Prostate gland (tissue), 2 donors: ENCODE measurements at regions of chr17 and their contacts with region 1.

Region 1: GRCh38 chr17:45894022-45894784 is at the start of gene MAPT:
- DNase-seq: peak; percentile 87
- H3K4me3 ChIP-seq: peak within 1 kb of the TSS; percentile 68 to 73
- H3K27ac ChIP-seq: peak within 1 kb of the TSS; percentile 62
- H3K4me1 ChIP-seq: no peaks in the 10 kb centered on the region
- H3K27me3 ChIP-seq: peaks cover 14% of the 10 kb centered on the region
- CTCF ChIP-seq: peak; percentile 93 to 99 (median 96)
- POLR2A ChIP-seq: peak; percentile 28
- total RNA-seq, gene MAPT: 11.7 to 14.7 TPM

Region 2: GRCh38 chr17:45852535-45853297 is 41.5 kb before region 1 on chr17:
- intact Hi-C with region 1: no loop called
- DNase-seq: peak; percentile 50
- H3K4me3 ChIP-seq: no peak overlapping the region
- H3K27ac ChIP-seq: no peak overlapping the region
- H3K4me1 ChIP-seq: no peaks in the 10 kb centered on the region
- H3K27me3 ChIP-seq: no peaks in the 10 kb centered on the region
- CTCF ChIP-seq: peak; percentile 78 to 80 (median 79)
- POLR2A ChIP-seq: no peak

Region 3: GRCh38 chr17:45940826-45941225 is 46.6 kb after region 1 on chr17:
- intact Hi-C with region 1: loop called (anchors 2 kb)
- DNase-seq: peak; percentile 75
- H3K4me3 ChIP-seq: no peak overlapping the region
- H3K27ac ChIP-seq: peak overlapping the region; percentile 73 to 79
- H3K4me1 ChIP-seq: peaks cover 7% of the 10 kb centered on the region
- H3K27me3 ChIP-seq: no peaks in the 10 kb centered on the region
- CTCF ChIP-seq: no peak
- POLR2A ChIP-seq: no peak

Region 4: GRCh38 chr17:45948881-45949624 is 54.9 kb after region 1 on chr17:
- intact Hi-C with region 1: loop called (anchors 2 kb)
- DNase-seq: peak; percentile 59
- H3K4me3 ChIP-seq: peak overlapping the region in 1 of 2 donors; percentile 5
- H3K27ac ChIP-seq: peak overlapping the region in 1 of 2 donors; percentile 33
- H3K4me1 ChIP-seq: no peaks in the 10 kb centered on the region
- H3K27me3 ChIP-seq: no peaks in the 10 kb centered on the region
- CTCF ChIP-seq: peak; percentile 32 to 86 (median 66)
- POLR2A ChIP-seq: no peak